BJ (cell line): ENCODE measurements at regions of chr16 and their contacts with region 1.

Region 1: GRCh38 chr16:57802341-57803133 is at the start of gene KIFC3:
- DNase-seq: no peak
- H3K4me3 ChIP-seq: peak within 1 kb of the TSS; percentile 68
- H3K27me3 ChIP-seq: no peaks in the 10 kb centered on the region
- CTCF ChIP-seq: no peak
- polyA plus RNA-seq, gene KIFC3: 35.3 and 60.5 TPM in 2 replicates

Region 2: GRCh38 chr16:57816334-57816745 is 13.8 kb after region 1 on chr16:
- CTCF ChIA-PET with region 1: interaction called, 3 read pairs
- POLR2A ChIA-PET with region 1: interaction called, 10 read pairs
- DNase-seq: peak; percentile 75
- H3K4me3 ChIP-seq: no peak overlapping the region
- H3K27me3 ChIP-seq: no peaks in the 10 kb centered on the region
- CTCF ChIP-seq: no peak

Region 3: GRCh38 chr16:57887711-57888110 is 85.2 kb after region 1 on chr16:
- CTCF ChIA-PET with region 1: no interaction called
- POLR2A ChIA-PET with region 1: no interaction called
- DNase-seq: no peak
- H3K4me3 ChIP-seq: no peak overlapping the region
- H3K27me3 ChIP-seq: peaks cover 12% of the 10 kb centered on the region
- CTCF ChIP-seq: no peak